ENCODE measurements at regions of chr2 and their contacts with region 1.

Region 1: GRCh38 chr2:44616667-44617155 is 255.0 kb downstream of the CAMKMT start:
- DNase-seq: peak; percentile 22
- H3K4me3 Mint-ChIP-seq: no peak overlapping the region
- H3K27ac Mint-ChIP-seq: no peak overlapping the region
- H3K4me1 Mint-ChIP-seq: peaks cover 7% of the 10 kb centered on the region
- H3K27me3 Mint-ChIP-seq: no peaks in the 10 kb centered on the region

Region 2: DNA sequence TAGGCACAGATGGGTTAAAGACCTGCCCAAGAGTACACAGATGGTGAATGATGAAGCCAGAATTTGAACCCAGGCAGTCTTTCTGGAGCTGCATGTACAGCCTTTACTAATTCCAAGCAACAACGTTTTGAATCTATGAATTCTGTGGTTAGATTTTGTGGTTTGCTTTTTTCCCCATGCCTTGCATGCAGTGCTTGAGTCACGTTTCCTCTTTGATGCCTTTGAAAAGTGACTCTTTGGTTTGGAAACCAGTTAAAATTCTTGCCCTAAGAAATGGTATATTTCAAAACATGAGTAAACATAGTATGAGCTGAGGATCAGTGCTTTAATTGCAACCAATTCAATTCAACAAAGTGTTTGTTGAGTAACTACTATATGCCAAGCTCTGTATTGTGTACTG is 496.3 kb before region 1 on chr2:
- CTCF ChIA-PET with region 1: no interaction called
- intact Hi-C with region 1: loop called (anchors 2 kb)
- DNase-seq: peak; percentile 62
- H3K4me3 Mint-ChIP-seq: no peak overlapping the region
- H3K27ac Mint-ChIP-seq: peak overlapping the region; percentile 4
- H3K4me1 Mint-ChIP-seq: peaks cover 32% of the 10 kb centered on the region
- H3K27me3 Mint-ChIP-seq: no peaks in the 10 kb centered on the region

Region 3: GRCh38 chr2:44543773-44544725 is 72.7 kb before region 1 on chr2:
- CTCF ChIA-PET with region 1: no interaction called
- intact Hi-C with region 1: no loop called
- DNase-seq: no peak
- H3K4me3 Mint-ChIP-seq: no peak overlapping the region
- H3K27ac Mint-ChIP-seq: no peak overlapping the region
- H3K4me1 Mint-ChIP-seq: no peaks in the 10 kb centered on the region
- H3K27me3 Mint-ChIP-seq: no peaks in the 10 kb centered on the region

Region 4: GRCh38 chr2:44578421-44579135 is 38.1 kb before region 1 on chr2:
- CTCF ChIA-PET with region 1: interaction called, 5 read pairs
- intact Hi-C with region 1: loop called (anchors 1 kb)
- DNase-seq: no peak
- H3K4me3 Mint-ChIP-seq: no peak overlapping the region
- H3K27ac Mint-ChIP-seq: peak overlapping the region; percentile 15
- H3K4me1 Mint-ChIP-seq: peaks cover 37% of the 10 kb centered on the region
- H3K27me3 Mint-ChIP-seq: no peaks in the 10 kb centered on the region

Region 5: DNA sequence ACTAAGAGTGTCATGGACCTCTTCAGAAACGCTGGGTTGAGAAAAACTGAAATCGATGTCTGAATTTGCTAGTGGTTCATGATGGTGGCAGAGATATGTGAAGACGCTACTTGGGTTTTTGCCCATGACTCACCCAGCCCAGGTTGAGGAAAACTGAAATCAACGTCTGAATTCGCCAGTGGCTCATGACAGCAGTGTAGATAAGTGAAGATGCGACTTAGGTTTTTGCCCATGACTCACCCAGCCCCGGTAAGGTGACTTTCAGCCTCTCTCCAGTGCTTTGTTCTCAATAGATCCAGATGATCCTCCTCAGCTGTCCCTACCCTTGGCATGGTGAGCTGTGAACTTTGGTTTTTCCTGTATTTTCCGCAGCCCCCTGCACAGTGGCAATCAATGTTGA is 219.5 kb after region 1 on chr2:
- CTCF ChIA-PET with region 1: no interaction called
- intact Hi-C with region 1: loop called (anchors 1 kb)
- DNase-seq: peak; percentile 71
- H3K4me3 Mint-ChIP-seq: no peak overlapping the region
- H3K27ac Mint-ChIP-seq: no peak overlapping the region
- H3K4me1 Mint-ChIP-seq: peaks cover 13% of the 10 kb centered on the region
- H3K27me3 Mint-ChIP-seq: peaks cover 5% of the 10 kb centered on the region

Region 6: DNA sequence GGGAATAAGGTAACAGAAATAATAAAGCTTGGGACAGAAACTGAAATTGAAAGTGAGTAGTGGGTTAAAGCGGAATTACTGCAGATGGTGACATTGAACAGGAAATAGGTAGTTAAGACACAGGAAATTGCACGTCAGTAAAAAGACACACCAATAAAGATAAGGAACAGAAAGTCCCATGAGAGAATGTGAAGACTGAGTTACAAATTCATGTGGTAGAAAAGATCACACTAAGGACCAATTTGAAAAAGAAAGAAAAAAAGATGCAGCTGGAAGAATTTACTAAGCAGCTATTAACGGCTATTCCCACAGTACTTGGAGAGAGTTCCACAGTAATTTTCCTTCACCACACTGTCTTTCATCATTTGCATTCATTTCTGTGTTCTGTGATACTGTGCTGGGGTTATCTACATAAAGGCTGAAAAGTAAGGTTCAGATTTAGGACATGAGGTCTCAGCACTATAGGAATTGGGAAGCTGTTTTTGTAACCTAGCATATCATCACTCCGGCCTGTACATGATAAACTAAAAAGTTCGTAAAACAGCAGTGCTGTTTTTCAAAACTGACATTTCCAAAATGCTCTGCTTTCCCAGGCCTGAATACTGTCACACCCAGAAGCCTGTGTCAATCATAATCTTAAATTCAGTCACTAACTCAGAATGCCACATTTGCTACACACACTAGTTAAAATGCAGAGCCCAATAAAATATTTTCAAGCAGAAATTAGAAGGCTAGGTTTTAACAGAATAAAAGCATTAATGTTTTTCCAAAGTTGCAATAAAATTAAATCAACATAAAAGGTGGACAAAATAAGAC is 951.5 kb after region 1 on chr2:
- CTCF ChIA-PET with region 1: no interaction called
- intact Hi-C with region 1: loop called (anchors 1 kb)
- DNase-seq: no peak
- H3K4me3 Mint-ChIP-seq: peak overlapping the region; percentile 73
- H3K27ac Mint-ChIP-seq: peak overlapping the region; percentile 95
- H3K4me1 Mint-ChIP-seq: peaks cover 21% of the 10 kb centered on the region
- H3K27me3 Mint-ChIP-seq: no peaks in the 10 kb centered on the region

Region 7: GRCh38 chr2:46416739-46417403 is 1800.2 kb after region 1 on chr2:
- CTCF ChIA-PET with region 1: no interaction called
- intact Hi-C with region 1: no loop called
- DNase-seq: no peak
- H3K4me3 Mint-ChIP-seq: no peak overlapping the region
- H3K27ac Mint-ChIP-seq: no peak overlapping the region
- H3K4me1 Mint-ChIP-seq: no peaks in the 10 kb centered on the region
- H3K27me3 Mint-ChIP-seq: no peaks in the 10 kb centered on the region

Measured in activated naive CD4-positive, alpha-beta T cell treated with anti-CD3 and anti-CD28 coated beads for 36 hours (primary cell).